IMR-90 (cell line): ENCODE measurements at regions of chr21 and their contacts with region 1.

Region 1: DNA sequence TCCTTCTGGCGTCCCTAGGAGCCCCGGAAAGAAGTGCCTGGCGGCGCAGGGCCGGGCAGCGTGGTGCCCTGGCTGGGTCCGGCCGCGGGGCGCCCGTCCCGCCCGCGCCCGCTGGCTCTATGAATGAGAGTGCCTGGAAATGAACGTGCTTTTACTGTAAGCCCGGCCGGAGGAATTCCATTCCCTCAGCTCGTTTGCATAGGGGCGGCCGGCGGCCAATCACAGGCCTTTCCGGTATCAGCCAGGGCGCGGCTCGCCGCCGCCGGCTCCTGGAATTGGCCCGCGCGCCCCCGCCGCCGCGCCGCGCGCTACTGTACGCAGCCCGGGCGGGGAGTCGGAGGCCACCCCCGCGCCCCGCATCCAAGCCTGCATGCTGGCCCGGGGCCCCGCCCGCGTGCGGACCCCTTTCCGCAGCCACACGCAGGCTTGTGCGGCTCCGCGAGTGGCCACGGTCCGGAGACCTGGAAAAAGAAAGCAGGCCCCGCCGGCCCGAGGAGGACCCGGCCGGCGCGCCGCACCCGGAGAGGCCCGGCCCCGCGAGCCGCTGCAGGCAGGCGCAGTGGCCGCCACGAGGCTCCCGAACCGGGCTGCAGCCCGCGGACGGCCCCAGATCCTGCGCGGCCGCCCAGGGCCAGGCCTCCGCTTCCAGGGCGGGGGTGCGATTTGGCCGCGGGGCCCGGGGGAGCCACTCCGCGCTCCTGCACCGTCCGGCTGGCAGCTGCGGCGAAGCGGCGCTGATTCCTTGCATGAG is 160.4 kb downstream of the RUNX1 start:
- DNase-seq: peak; percentile 96
- ATAC-seq: peak; percentile 62
- H3K4me3 ChIP-seq: peak overlapping the region; percentile 99
- H3K27ac ChIP-seq: peak overlapping the region; percentile 99
- H3K4me1 ChIP-seq: no peaks in the 10 kb centered on the region
- H3K27me3 ChIP-seq: no peaks in the 10 kb centered on the region
- CTCF ChIP-seq: no peak
- POLR2A ChIP-seq: peak; percentile 98
- RAD21 ChIP-seq: peak; percentile 25

Region 2: GRCh38 chr21:34498623-34499022 is 390.1 kb before region 1 on chr21:
- CTCF ChIA-PET with region 1: no interaction called
- POLR2A ChIA-PET with region 1: no interaction called
- dilution Hi-C with region 1: no loop called
- in situ Hi-C with region 1: no loop called
- intact Hi-C with region 1: no loop called
- DNase-seq: peak; percentile 38
- ATAC-seq: no peak
- H3K4me3 ChIP-seq: no peak overlapping the region
- H3K27ac ChIP-seq: no peak overlapping the region
- H3K4me1 ChIP-seq: no peaks in the 10 kb centered on the region
- H3K27me3 ChIP-seq: peaks cover 6% of the 10 kb centered on the region
- CTCF ChIP-seq: no peak
- POLR2A ChIP-seq: no peak
- RAD21 ChIP-seq: no peak

Region 3: GRCh38 chr21:34745557-34746255 is 143.0 kb before region 1 on chr21:
- CTCF ChIA-PET with region 1: interaction called, 9 read pairs
- POLR2A ChIA-PET with region 1: interaction called, 12 read pairs
- dilution Hi-C with region 1: no loop called
- in situ Hi-C with region 1: no loop called
- intact Hi-C with region 1: loop called (anchors 1 kb)
- DNase-seq: peak; percentile 86
- ATAC-seq: peak; percentile 99
- H3K4me3 ChIP-seq: no peak overlapping the region
- H3K27ac ChIP-seq: peak overlapping the region; percentile 3; the same call in 1 of the 2 replicates
- H3K4me1 ChIP-seq: 0 out of 2 replicates have a peak, but pooled peaks cover 4% of the 10 kb centered on the region
- H3K27me3 ChIP-seq: no peaks in the 10 kb centered on the region; the same call in 1 of the 2 replicates
- CTCF ChIP-seq: peak; percentile 98
- POLR2A ChIP-seq: peak; percentile 66
- RAD21 ChIP-seq: peak; percentile 99

Region 4: GRCh38 chr21:34871026-34871908 is 17.5 kb before region 1 on chr21:
- CTCF ChIA-PET with region 1: no interaction called
- POLR2A ChIA-PET with region 1: no interaction called
- dilution Hi-C with region 1: no loop called
- in situ Hi-C with region 1: no loop called
- intact Hi-C with region 1: no loop called
- DNase-seq: no peak
- ATAC-seq: no peak
- H3K4me3 ChIP-seq: no peak overlapping the region
- H3K27ac ChIP-seq: no peak overlapping the region
- H3K4me1 ChIP-seq: peaks cover 28% of the 10 kb centered on the region
- H3K27me3 ChIP-seq: no peaks in the 10 kb centered on the region
- CTCF ChIP-seq: no peak
- POLR2A ChIP-seq: peak; percentile 17; the same call in 1 of the 2 replicates
- RAD21 ChIP-seq: no peak

Region 5: GRCh38 chr21:35051287-35051818 is 162.6 kb after region 1 on chr21:
- CTCF ChIA-PET with region 1: interaction called, 6 read pairs
- POLR2A ChIA-PET with region 1: interaction called, 3 read pairs
- dilution Hi-C with region 1: no loop called
- in situ Hi-C with region 1: no loop called
- intact Hi-C with region 1: loop called (anchors 1 kb)
- DNase-seq: peak; percentile 80
- ATAC-seq: peak; percentile 63
- H3K4me3 ChIP-seq: no peak overlapping the region
- H3K27ac ChIP-seq: peak overlapping the region; percentile 42
- H3K4me1 ChIP-seq: peaks cover 29% of the 10 kb centered on the region
- H3K27me3 ChIP-seq: no peaks in the 10 kb centered on the region
- CTCF ChIP-seq: peak; percentile 61
- POLR2A ChIP-seq: no peak
- RAD21 ChIP-seq: peak; percentile 67

Region 6: DNA sequence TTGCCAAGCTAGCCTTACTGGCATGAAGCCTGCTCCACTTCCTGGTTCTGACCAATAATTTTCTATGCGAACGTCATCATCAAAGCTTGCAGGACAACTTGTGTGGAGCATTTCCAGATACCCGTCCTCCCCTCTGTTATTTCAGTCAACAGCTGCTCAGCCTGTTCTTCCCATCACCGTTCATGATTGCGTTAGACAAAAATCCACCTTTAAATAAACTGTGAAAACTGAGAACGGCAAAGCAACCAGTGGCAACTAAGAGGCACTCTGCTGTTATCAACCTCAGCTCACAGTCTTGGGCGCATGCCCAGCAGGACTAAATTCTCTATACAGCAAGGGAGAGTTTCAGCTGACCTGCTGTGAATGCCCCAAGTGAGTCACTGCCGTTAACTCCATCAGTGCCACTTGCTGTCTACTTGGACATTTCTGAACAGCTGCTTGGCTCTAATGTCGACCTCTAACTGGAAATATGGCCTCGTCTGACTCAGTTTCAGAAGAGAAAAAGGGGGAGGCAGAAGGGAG is 367.8 kb after region 1 on chr21:
- CTCF ChIA-PET with region 1: interaction called, 3 read pairs
- POLR2A ChIA-PET with region 1: interaction called, 6 read pairs
- dilution Hi-C with region 1: no loop called
- in situ Hi-C with region 1: no loop called
- intact Hi-C with region 1: loop called (anchors 2 kb)
- DNase-seq: peak; percentile 100
- ATAC-seq: peak; percentile 94
- H3K4me3 ChIP-seq: no peak overlapping the region
- H3K27ac ChIP-seq: peak overlapping the region; percentile 49; the same call in 1 of the 2 replicates
- H3K4me1 ChIP-seq: peaks cover 8% of the 10 kb centered on the region
- H3K27me3 ChIP-seq: no peaks in the 10 kb centered on the region
- CTCF ChIP-seq: no peak; the same call in 1 of the 2 replicates
- POLR2A ChIP-seq: no peak
- RAD21 ChIP-seq: peak; percentile 40

Region 7: DNA sequence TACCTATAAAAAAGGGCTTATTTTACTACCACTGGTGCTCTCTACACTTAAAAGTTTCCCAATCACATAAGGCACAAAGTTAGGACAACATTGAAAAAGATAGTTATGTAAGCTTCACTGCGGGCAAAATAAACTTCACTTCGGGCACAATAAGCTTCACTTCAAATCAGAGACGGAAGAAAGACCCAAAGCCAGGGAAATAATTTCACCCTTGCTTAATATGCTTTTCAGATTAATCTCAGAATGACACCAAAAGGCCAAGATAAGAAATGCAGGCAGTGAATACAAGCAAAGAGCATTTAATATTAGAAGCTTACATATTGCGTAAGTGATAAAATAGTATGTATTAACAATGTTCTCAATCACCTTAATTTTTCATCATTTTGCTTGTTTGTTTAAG is 727.3 kb after region 1 on chr21:
- CTCF ChIA-PET with region 1: no interaction called
- POLR2A ChIA-PET with region 1: interaction called, 5 read pairs
- dilution Hi-C with region 1: no loop called
- in situ Hi-C with region 1: no loop called
- intact Hi-C with region 1: loop called (anchors 1 kb)
- DNase-seq: peak; percentile 70
- ATAC-seq: peak; percentile 66
- H3K4me3 ChIP-seq: no peak overlapping the region
- H3K27ac ChIP-seq: no peak overlapping the region
- H3K4me1 ChIP-seq: peaks cover 9% of the 10 kb centered on the region
- H3K27me3 ChIP-seq: no peaks in the 10 kb centered on the region
- CTCF ChIP-seq: peak; percentile 60
- POLR2A ChIP-seq: no peak
- RAD21 ChIP-seq: peak; percentile 63

Region 8: DNA sequence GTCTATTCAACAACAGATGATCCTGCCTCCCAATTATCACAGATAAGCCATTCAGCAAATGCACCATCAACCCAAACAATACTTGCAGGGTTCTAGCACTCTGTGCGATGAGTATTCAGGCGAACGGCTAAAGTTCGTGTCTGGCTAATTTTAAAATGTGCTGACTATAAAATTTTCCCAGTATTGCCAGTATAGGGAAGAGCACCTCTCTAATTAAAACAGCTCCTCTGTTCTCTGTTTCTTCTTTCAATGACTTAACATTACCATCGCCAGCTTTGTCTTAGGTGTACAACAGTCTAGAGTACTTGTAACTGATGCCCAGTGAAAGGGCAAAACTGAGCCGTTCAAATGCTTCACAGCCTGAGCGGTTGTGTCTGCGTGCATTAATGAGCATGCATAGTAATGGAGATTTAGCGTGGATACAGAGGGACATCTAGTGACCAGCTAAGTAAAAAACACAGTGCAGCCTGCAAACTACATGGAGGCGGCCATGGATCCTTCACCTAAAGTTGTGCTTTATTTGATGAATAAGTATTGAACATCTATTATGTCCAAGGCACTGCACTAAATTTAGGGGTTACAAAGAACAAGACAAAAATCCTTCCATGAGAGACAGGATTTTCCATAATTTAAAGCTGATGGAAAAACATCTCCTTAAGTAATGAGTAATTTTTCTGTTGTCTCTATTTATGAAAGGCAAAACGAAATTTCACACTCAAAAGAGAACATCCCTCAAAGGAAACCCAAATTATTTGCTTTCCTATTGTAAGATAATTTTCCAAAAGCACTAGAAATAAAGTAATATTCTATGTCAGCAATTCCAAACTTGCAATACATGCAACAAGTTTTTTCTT is 1051.6 kb after region 1 on chr21:
- CTCF ChIA-PET with region 1: interaction called, 3 read pairs
- POLR2A ChIA-PET with region 1: no interaction called
- dilution Hi-C with region 1: no loop called
- in situ Hi-C with region 1: loop called (anchors 10 kb)
- intact Hi-C with region 1: loop called (anchors 2 kb)
- DNase-seq: peak; percentile 81
- ATAC-seq: peak; percentile 100
- H3K4me3 ChIP-seq: no peak overlapping the region
- H3K27ac ChIP-seq: no peak overlapping the region
- H3K4me1 ChIP-seq: no peaks in the 10 kb centered on the region
- H3K27me3 ChIP-seq: no peaks in the 10 kb centered on the region; the same call in 1 of the 2 replicates
- CTCF ChIP-seq: peak; percentile 88
- POLR2A ChIP-seq: no peak
- RAD21 ChIP-seq: peak; percentile 93